ENCODE measurements at regions of chr5 and their contacts with region 1.

Region 1: GRCh38 chr5:173144200-173145176 is at the start of gene BNIP1:
- DNase-seq: peak; percentile 93
- H3K4me3 ChIP-seq: peak within 1 kb of the TSS; percentile 90
- H3K27ac ChIP-seq: peak within 1 kb of the TSS; percentile 65
- H3K4me1 ChIP-seq: no peaks in the 10 kb centered on the region
- H3K27me3 ChIP-seq: no peaks in the 10 kb centered on the region
- total RNA-seq, gene BNIP1: 7.3 and 14.1 TPM in 2 replicates

Region 2: DNA sequence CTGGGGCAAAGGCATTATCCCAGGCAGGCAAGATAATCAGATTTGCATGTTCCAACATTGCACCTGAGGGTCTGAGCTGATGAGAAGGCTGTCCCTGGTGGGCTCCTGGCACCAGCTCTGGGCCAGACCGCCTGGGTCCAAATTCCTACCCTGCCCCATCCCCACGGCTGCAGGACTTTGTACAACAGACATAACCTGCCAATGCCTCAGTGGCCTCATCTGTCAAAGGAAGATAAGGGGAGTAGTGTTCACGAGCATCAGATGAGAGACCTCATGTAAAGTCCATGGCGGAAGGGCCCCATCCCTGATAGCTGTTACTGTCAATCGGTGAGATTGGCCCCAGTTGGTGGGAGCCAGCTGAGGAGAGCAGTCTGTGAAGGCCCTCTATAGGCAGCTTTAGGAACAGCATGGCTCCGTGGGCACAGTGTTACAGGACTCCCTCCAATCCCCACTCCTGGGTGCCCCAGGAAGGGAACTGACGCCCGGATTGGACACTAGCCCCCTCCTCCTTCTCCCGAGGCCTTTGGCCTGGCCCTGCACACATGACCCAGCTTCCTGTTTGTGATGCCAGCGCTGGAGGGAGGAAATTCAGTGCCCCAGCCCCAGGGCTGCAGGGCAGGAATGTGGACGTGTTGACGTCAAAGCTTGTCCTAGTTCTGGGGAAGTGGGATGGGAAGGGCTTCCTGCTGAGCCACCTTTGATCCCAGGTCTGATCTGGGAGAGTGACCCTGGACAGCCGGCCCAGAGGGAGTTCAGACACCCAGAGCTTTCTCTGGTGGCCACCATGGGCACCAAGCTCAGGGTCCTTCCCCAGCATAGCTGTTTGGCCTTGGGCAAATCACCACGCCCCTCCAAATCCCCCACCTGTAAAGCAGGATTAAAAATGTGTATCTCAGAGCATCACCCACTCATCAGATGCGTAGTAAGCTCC is 429.7 kb before region 1 on chr5:
- in situ Hi-C with region 1: loop called (anchors 25 kb)
- DNase-seq: peak; percentile 78
- H3K4me3 ChIP-seq: no peak overlapping the region
- H3K27ac ChIP-seq: 0 out of 2 replicates have a peak overlapping the region, but pooled peaks have one; percentile 5
- H3K4me1 ChIP-seq: peaks cover 10% of the 10 kb centered on the region
- H3K27me3 ChIP-seq: no peaks in the 10 kb centered on the region

Region 3: DNA sequence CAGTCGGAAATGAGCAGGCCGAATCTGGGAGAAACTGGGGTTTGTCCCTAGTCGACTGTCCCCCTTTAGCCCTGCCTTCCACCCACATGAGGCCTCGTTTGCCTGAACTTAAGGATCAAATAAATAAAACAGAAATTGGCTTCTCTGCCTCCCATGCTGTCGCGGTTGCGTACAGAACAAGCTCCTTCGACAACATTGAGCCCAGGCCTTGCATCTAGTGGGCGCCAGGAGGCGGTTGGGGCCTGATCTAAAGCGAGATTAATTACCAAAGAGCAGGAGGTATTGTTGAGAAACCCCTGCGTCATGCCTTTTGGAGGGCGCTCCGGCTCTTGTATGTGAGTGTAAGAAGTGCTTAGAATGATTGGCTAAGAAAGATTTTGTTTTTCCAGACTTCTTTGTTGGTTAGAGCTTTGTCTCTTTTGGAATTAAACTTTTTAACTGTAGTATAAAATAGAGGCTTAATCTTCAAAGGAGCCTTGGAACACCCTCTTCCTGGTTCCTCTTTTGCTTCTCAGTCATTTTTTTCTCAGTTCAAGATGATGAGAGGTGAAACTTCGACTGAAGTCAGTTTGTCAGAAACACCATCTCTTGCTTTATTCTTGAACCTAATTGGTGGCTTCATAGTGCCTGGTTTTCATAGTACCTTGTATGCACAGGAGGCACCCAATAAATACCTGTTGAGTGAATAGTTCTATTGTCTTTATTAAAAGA is 160.1 kb before region 1 on chr5:
- in situ Hi-C with region 1: loop called (anchors 10 kb)
- DNase-seq: peak; percentile 97
- H3K4me3 ChIP-seq: peak overlapping the region; percentile 86
- H3K27ac ChIP-seq: peak overlapping the region; percentile 92
- H3K4me1 ChIP-seq: peaks cover 12% of the 10 kb centered on the region
- H3K27me3 ChIP-seq: no peaks in the 10 kb centered on the region

Measured in GM23248 (cell line).